ENCODE measurements at regions of chr17 and their contacts with region 1.

Region 1: DNA sequence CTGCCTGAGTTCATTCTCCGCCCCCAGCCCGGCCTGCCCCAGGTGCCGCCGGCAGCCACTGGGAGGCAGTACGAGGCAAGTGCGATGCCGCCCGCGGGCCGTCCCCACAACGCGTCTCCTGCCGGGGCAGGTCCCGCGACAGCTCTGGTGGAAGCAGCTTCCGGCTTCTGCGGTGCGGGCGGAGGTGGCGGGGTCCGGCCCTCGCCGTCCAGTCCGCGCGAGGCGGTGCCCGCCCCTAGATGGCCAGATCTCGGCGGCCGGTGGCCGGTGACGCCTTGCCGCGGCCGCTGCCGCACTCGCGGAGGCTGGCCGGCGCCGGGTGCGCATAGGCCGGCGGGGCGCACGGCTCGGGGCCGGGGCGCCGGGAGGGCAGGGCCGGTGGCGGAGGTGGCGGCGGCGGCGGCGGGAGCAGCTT is 1.8 kb downstream of the GJD3 start:
- DNase-seq: peak; percentile 95
- H3K4me3 Mint-ChIP-seq: peak overlapping the region; percentile 76
- H3K27ac Mint-ChIP-seq: no peak overlapping the region
- H3K4me1 Mint-ChIP-seq: peaks cover 12% of the 10 kb centered on the region
- H3K27me3 Mint-ChIP-seq: peaks cover 12% of the 10 kb centered on the region

Region 2: GRCh38 chr17:40203131-40203530 is 159.6 kb before region 1 on chr17:
- CTCF ChIA-PET with region 1: no interaction called
- intact Hi-C with region 1: loop called (anchors 1 kb)
- DNase-seq: no peak
- H3K4me3 Mint-ChIP-seq: no peak overlapping the region
- H3K27ac Mint-ChIP-seq: no peak overlapping the region
- H3K4me1 Mint-ChIP-seq: no peaks in the 10 kb centered on the region
- H3K27me3 Mint-ChIP-seq: no peaks in the 10 kb centered on the region

Region 3: GRCh38 chr17:40303009-40303657 is 59.6 kb before region 1 on chr17:
- CTCF ChIA-PET with region 1: interaction called, 178 read pairs
- intact Hi-C with region 1: no loop called
- DNase-seq: peak; percentile 61
- H3K4me3 Mint-ChIP-seq: no peak overlapping the region
- H3K27ac Mint-ChIP-seq: no peak overlapping the region
- H3K4me1 Mint-ChIP-seq: peaks cover 10% of the 10 kb centered on the region
- H3K27me3 Mint-ChIP-seq: no peaks in the 10 kb centered on the region

Region 4: GRCh38 chr17:40417609-40418427 is 55.1 kb after region 1 on chr17 and contains the start of gene TOP2A:
- CTCF ChIA-PET with region 1: interaction called, 6 read pairs
- intact Hi-C with region 1: loop called (anchors 1 kb)
- DNase-seq: peak; percentile 99
- H3K4me3 Mint-ChIP-seq: peak within 1 kb of the TSS; percentile 98
- H3K27ac Mint-ChIP-seq: peak within 1 kb of the TSS; percentile 90
- H3K4me1 Mint-ChIP-seq: peaks cover 26% of the 10 kb centered on the region
- H3K27me3 Mint-ChIP-seq: peaks cover 2% of the 10 kb centered on the region
- total RNA-seq, gene TOP2A: 410 to 416 TPM

Region 5: GRCh38 chr17:40443583-40444327 is 81.1 kb after region 1 on chr17:
- CTCF ChIA-PET with region 1: interaction called, 4 read pairs
- intact Hi-C with region 1: loop called (anchors 1 kb)
- DNase-seq: peak; percentile 74
- H3K4me3 Mint-ChIP-seq: peak overlapping the region; percentile 78
- H3K27ac Mint-ChIP-seq: peak overlapping the region; percentile 76
- H3K4me1 Mint-ChIP-seq: peaks cover 29% of the 10 kb centered on the region
- H3K27me3 Mint-ChIP-seq: peaks cover 4% of the 10 kb centered on the region

Region 6: GRCh38 chr17:40536295-40537171 is 173.8 kb after region 1 on chr17:
- CTCF ChIA-PET with region 1: interaction called, 82 read pairs
- intact Hi-C with region 1: loop called (anchors 1 kb)
- DNase-seq: no peak
- H3K4me3 Mint-ChIP-seq: no peak overlapping the region
- H3K27ac Mint-ChIP-seq: peak overlapping the region; percentile 42
- H3K4me1 Mint-ChIP-seq: peaks cover 90% of the 10 kb centered on the region
- H3K27me3 Mint-ChIP-seq: no peaks in the 10 kb centered on the region